CD4-positive, alpha-beta memory T cell (primary cell): ENCODE measurements at regions of chr11 and their contacts with region 1.

Region 1: DNA sequence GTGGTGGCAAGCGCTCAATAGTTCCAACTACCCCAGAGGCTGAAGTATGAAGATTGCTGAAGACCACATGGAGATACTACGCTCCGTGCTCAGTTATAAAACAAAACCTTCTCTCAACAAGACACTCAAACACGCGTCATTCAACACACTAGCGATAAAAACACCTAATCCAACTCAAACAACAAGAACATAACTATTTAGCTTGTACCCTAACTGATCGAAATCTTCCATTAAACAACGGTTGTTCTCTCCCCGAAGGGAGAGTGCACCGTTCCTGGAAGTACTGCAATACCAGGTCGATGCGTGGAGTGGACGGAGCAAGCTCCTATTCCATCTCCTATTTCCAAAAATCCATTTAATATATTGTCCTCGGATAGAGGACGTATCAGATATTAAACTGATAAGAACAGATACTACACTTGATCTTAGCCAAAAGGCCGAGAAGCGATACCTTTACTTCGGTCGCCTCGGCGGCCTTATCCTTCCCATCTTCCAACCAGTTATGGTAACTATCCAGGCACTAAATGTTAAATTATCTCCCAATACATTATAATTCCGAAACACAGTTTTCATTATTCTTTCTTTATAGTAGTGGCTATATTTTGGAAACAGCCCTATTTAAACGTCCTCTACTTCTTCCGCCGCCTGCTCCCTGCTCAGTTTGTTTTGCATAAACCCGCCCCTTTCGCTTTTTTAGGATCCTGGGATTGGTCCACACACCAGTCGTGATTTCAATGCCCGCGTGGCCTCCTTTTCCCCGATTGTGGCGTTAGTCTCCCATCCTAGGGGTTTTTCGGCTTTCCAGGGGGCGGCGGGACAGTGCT is 2.2 kb upstream of the WDR74 start:
- DNase-seq: peak; percentile 88 to 92 (median 90)
- H3K4me3 ChIP-seq: peak overlapping the region; percentile 74 to 86
- H3K4me3 Mint-ChIP-seq: no peak overlapping the region
- H3K27ac ChIP-seq: peak overlapping the region; percentile 98
- H3K27ac Mint-ChIP-seq: no peak overlapping the region
- H3K4me1 ChIP-seq: peaks cover 32% of the 10 kb centered on the region
- H3K4me1 Mint-ChIP-seq: peaks cover 10 to 34% (median 21%) of the 10 kb centered on the region in 4 donors
- H3K27me3 ChIP-seq: no peaks in the 10 kb centered on the region
- H3K27me3 Mint-ChIP-seq: no peaks in the 10 kb centered on the region

Region 2: DNA sequence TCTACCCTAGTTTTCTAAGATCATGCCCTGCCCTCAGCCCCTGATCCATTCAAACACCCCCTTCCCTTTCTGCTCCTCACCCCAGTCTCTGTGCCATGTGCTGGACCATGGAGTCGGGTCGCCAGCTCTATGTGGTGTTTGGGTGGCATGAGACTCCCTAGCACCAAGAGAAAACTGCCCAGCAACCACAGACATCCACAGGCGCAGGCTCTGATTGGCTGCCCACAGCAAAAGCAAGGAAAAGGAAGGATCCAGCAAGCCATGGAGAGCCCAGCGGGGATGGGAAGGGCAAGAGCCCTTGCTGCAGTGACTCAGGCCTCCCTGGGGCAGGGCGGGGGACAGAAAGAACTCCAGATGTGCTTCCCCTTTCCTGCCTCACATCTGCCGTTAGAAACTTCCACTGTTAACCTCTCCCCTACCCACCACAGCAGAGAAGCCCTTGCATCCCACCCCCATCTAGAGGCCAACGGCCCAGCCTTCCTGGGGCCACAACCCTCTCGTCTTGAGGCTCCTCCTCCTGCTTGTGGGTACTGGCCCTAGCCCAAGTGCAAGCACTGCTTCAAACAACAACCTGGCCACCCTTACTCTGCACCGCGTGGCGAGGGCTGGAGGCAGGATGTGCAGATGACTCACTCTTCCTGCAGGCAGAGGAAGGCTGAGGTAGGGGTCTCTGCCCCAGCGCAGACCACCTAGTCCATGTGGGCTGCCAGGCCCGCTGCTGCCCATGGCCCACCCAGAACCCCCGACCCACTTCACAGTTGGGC is 285.3 kb before region 1 on chr11:
- CTCF ChIA-PET with region 1: no interaction called
- POLR2A ChIA-PET with region 1: interaction called, 41 read pairs
- intact Hi-C with region 1: no loop called
- DNase-seq: peak; percentile 85 to 97 (median 87)
- H3K4me3 ChIP-seq: peak overlapping the region; percentile 37 to 75
- H3K4me3 Mint-ChIP-seq: peak overlapping the region; percentile 82 to 91 (median 90)
- H3K27ac ChIP-seq: peak overlapping the region; percentile 95
- H3K27ac Mint-ChIP-seq: peak overlapping the region; percentile 98 to 100 (median 100)
- H3K4me1 ChIP-seq: peaks cover 98% of the 10 kb centered on the region
- H3K4me1 Mint-ChIP-seq: peaks cover 73 to 97% (median 85%) of the 10 kb centered on the region in 4 donors
- H3K27me3 ChIP-seq: no peaks in the 10 kb centered on the region
- H3K27me3 Mint-ChIP-seq: peaks cover 0 to 2% of the 10 kb centered on the region in 2 donors

Region 3: DNA sequence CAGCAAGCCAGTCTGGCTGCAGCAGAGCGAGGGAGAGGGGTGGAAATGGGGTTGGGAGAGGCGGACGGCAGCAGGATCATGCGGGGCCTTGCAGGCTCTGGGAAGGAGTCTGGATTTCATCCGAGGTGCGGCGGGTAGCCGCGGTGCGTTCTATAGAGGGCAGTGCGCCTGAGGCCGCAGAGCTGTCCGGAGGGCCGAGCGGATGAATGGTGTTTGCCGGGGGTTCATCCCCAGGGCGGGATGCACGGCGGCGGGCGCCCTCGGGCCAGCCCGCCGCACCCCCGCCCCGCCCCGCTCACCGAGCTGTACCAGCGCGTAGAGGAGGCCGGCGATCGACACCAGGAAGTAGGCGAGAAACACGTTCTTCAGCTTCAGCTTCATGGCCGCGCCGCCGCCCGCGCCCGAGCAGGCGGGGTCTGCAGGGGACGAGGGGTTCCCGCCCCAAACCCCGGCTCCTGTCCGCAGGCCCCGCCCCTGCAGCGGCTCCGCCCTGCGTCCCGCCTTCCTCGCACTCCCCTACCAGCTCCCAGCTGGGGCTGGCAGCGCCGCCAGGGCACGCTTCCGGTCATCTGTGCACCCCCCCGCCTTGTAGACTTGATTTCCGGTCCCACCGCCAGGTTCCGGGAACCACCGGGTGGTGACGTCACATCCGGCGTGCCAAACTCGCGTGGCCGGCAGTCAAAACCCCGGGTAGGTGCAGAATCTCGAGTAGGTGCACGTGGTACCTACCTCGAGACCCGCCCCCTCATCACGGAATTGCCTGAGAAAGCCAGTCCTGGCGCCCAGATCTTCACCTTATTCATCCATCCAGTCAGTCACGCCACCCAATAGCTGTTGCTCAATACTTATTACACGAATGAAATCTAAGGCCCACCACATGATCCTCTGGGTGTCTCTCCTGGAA is 219.8 kb before region 1 on chr11 and contains the start of gene B3GAT3:
- CTCF ChIA-PET with region 1: no interaction called
- POLR2A ChIA-PET with region 1: interaction called, 12 read pairs
- intact Hi-C with region 1: no loop called
- DNase-seq: peak; percentile 95 to 99 (median 96)
- H3K4me3 ChIP-seq: peak within 1 kb of the TSS; percentile 83 to 89
- H3K4me3 Mint-ChIP-seq: peak within 1 kb of the TSS; percentile 89 to 98 (median 95)
- H3K27ac ChIP-seq: peak within 1 kb of the TSS; percentile 94
- H3K27ac Mint-ChIP-seq: peak within 1 kb of the TSS; percentile 91 to 99 (median 98)
- H3K4me1 ChIP-seq: peaks cover 26% of the 10 kb centered on the region
- H3K4me1 Mint-ChIP-seq: peaks cover 19 to 29% (median 20%) of the 10 kb centered on the region in 4 donors
- H3K27me3 ChIP-seq: no peaks in the 10 kb centered on the region
- H3K27me3 Mint-ChIP-seq: no peaks in the 10 kb centered on the region
- total RNA-seq, gene B3GAT3: 66.3 to 74.3 TPM

Region 4: DNA sequence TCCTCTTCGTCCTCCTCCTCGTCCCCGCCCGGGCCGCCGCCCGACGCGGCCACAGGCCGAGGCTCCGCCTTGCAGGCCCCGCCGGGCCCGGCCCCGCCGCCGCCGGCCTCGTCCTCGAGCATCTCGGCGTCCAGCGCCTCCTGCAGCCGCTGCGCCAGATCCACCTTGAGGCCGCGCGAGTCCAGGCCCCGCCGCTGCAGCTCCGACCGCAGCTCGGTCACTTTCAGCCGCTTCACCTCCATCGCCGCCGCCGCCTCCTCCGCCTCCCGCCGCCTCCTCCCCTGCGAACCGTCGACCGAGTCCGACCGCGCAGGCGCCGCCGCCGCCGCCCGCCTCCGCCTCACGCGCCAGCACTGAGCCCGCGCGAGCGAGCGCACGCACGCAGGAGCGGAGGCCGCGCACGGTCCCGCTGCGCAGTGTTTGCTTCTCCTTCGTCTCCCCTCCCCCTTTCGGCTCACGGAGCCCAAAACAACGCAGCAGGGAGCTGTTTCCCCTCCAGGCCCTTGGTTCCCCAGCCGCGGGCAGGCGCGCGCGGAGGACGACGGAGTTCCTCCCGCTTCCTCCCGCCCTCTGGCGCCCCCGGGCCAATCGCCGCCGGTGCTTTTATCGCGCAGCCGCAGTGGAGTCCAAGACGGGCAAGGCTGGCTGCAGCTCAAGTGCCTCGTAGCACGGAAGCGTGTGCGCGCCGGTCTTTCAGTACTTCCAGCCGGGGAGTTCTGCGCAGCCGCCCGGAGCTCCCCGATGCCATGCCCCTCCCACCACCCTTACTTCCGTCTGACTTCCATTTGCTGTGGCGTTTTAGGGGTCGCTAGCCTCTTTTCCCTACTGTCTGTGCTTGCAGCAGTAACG is 114.4 kb before region 1 on chr11 and contains the start of gene HNRNPUL2:
- CTCF ChIA-PET with region 1: no interaction called
- POLR2A ChIA-PET with region 1: interaction called, 173 read pairs
- intact Hi-C with region 1: loop called (anchors 1 kb)
- DNase-seq: peak; percentile 99
- H3K4me3 ChIP-seq: peak within 1 kb of the TSS; percentile 95 to 99
- H3K4me3 Mint-ChIP-seq: peak within 1 kb of the TSS; percentile 84 to 98 (median 96)
- H3K27ac ChIP-seq: peak within 1 kb of the TSS; percentile 93
- H3K27ac Mint-ChIP-seq: peak within 1 kb of the TSS; percentile 98 to 99 (median 99)
- H3K4me1 ChIP-seq: peaks cover 50% of the 10 kb centered on the region
- H3K4me1 Mint-ChIP-seq: peaks cover 28 to 84% (median 50%) of the 10 kb centered on the region in 4 donors
- H3K27me3 ChIP-seq: no peaks in the 10 kb centered on the region
- H3K27me3 Mint-ChIP-seq: no peaks in the 10 kb centered on the region
- total RNA-seq, gene HNRNPUL2: 79.6 to 83.4 TPM

Region 5: DNA sequence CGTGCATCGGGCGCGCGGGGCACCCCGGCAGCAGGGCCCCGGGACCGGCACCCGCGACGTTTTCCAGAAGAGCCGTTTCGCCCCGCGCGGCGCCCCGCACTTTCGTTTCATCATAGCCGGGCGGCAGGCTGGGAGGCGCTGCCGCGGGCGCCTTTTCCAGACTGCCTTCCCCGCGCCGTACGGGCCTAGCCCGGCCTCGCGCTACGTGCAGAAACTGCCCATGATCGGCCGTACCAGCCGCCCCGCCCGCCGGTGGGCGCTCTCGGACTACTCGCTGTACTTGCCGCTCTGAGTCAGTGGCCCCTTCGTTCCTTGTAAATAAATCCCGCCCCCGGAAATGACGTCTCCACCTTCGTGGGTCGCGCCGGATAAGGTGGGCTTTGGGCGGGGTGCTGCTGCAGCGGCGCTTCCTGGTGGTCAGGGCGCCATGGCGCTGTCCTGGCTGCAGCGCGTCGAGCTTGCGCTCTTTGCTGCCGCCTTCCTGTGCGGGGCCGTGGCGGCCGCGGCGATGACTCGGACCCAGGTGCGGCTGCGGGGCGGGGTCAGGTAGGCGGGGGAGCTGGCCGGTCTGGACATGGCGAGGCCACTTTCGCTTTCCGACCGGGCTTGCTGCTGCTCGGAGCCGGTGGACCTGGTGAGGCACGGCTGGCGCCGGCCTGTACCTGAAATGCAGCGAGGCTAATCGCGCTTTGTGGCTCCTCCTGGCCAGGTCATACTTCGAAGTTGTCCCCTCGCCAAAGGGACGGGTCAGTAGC is 54.4 kb before region 1 on chr11 and contains the start of gene TMEM179B:
- CTCF ChIA-PET with region 1: interaction called, 27 read pairs
- POLR2A ChIA-PET with region 1: interaction called, 801 read pairs
- intact Hi-C with region 1: loop called (anchors 1 kb)
- DNase-seq: peak; percentile 95 to 99 (median 96)
- H3K4me3 ChIP-seq: peak within 1 kb of the TSS; percentile 73 to 95
- H3K4me3 Mint-ChIP-seq: peak within 1 kb of the TSS; percentile 93 to 97 (median 96)
- H3K27ac ChIP-seq: peak within 1 kb of the TSS; percentile 84
- H3K27ac Mint-ChIP-seq: peak within 1 kb of the TSS; percentile 89 to 98 (median 97)
- H3K4me1 ChIP-seq: peaks cover 45% of the 10 kb centered on the region
- H3K4me1 Mint-ChIP-seq: peaks cover 29 to 61% (median 47%) of the 10 kb centered on the region in 4 donors
- H3K27me3 ChIP-seq: no peaks in the 10 kb centered on the region
- H3K27me3 Mint-ChIP-seq: no peaks in the 10 kb centered on the region
- total RNA-seq, gene TMEM179B: 66.3 to 66.6 TPM

Region 6: GRCh38 chr11:62823677-62824076 is 17.9 kb before region 1 on chr11:
- CTCF ChIA-PET with region 1: no interaction called
- POLR2A ChIA-PET with region 1: interaction called, 33 read pairs
- intact Hi-C with region 1: no loop called
- DNase-seq: no peak
- H3K4me3 ChIP-seq: no peak overlapping the region
- H3K4me3 Mint-ChIP-seq: no peak overlapping the region
- H3K27ac ChIP-seq: no peak overlapping the region
- H3K27ac Mint-ChIP-seq: peak overlapping the region in 2 of 7 donors; percentile 36 to 70
- H3K4me1 ChIP-seq: no peaks in the 10 kb centered on the region
- H3K4me1 Mint-ChIP-seq: peaks cover 3 to 12% (median 9%) of the 10 kb centered on the region in 4 donors
- H3K27me3 ChIP-seq: no peaks in the 10 kb centered on the region
- H3K27me3 Mint-ChIP-seq: no peaks in the 10 kb centered on the region

Region 7: GRCh38 chr11:62880803-62881578 is 39.4 kb after region 1 on chr11 and contains the start of gene SLC3A2:
- CTCF ChIA-PET with region 1: no interaction called
- POLR2A ChIA-PET with region 1: interaction called, 115 read pairs
- intact Hi-C with region 1: loop called (anchors 1 kb)
- DNase-seq: peak; percentile 85 to 89 (median 88)
- H3K4me3 ChIP-seq: peak within 1 kb of the TSS; percentile 96 to 98
- H3K4me3 Mint-ChIP-seq: peak within 1 kb of the TSS; percentile 93 to 100 (median 100)
- H3K27ac ChIP-seq: peak within 1 kb of the TSS; percentile 93
- H3K27ac Mint-ChIP-seq: peak within 1 kb of the TSS; percentile 93 to 100 (median 99)
- H3K4me1 ChIP-seq: peaks cover 52% of the 10 kb centered on the region
- H3K4me1 Mint-ChIP-seq: peaks cover 26 to 60% (median 41%) of the 10 kb centered on the region in 4 donors
- H3K27me3 ChIP-seq: no peaks in the 10 kb centered on the region
- H3K27me3 Mint-ChIP-seq: no peaks in the 10 kb centered on the region
- total RNA-seq, gene SLC3A2: 205 to 215 TPM